OCI-LY7 (cell line): ENCODE measurements at regions of chr1 and their contacts with region 1.

Region 1: DNA sequence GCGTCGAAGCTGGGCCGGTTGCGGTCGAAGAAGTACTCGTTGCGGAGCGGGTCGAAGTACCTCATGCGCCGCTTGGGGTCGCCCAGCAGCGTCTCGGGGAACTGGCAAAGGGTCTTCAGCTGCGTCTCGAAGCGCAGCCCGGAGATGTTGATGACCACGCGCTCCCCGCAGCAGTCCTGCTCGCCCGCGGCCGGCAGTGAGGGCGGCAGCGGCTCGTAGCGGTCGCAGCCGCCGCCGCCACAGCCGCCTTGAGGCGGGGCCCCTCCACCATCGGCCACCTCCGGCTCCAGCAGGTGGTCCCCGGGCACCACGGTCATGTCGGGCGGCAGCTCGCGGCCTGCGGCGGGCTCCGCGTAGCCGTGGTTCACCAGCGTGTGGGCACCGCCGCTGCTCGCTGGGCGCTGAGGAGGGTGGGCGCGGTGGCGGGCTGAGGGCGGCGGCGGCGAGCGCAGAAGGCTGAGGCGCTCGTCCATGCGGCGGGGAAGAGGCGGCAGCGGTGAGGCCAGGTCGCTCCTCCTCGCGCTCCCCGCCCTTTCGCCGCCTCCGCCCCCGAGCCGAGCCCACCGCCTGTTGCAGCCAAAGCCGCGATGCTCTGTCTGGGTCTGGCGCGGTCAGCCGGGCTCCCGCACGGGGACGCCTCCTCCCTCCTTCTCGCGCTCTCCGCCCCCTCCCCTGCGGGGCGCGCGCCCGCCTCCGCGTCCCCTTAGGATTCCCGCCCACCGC is at the start of gene KCNA3:
- DNase-seq: peak; percentile 79
- H3K4me3 ChIP-seq: peak within 1 kb of the TSS; percentile 84
- H3K27ac ChIP-seq: peak within 1 kb of the TSS; percentile 97
- H3K4me1 ChIP-seq: peaks cover 29% of the 10 kb centered on the region
- CTCF ChIP-seq: peak; percentile 69
- total RNA-seq, gene KCNA3: 46.2 and 58.0 TPM in 2 replicates

Region 2: DNA sequence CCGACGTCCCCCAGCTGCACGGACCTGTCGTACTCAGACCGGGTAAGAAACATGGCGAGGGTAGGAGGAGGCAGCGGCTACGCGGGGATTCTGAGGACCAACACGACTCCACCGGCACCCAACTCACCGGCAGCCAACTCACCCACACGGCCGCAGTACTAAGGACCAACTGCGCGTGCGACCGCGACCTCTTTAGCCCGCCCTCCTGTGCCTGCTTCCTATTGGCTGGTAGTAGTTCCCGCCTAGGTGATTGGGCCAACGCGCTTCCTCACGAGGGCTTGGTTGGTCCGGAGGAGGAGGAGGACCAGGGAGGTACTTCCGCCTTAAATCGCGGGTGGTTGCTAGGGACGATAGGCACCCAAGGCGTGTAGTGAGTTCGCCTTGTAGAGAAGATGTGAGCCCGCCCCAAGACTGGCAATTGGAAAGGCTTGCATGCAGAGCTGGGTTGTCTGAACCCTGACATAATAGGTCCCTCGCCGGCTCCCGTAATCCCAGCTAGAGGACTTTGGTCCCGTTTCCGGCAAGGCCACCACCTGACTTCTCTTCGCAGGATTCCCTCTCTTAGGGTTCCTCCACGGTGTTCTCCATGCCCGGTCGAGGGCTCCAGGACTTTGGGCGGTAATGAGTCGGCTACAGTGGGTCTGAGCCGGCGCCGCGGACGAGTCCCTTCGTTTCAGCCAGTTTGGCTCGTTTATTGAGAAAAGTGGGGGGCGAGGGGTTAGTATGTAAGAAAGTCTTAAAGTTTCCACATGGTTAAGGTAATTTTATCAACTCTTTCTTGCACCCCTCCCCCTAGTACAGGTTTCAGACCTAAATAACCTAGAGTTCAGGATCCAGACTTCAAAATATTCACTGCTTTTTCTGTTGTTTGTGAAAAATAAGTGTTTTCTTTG is 1248.0 kb before region 1 on chr1 and contains the start of gene PSMA5:
- CTCF ChIA-PET with region 1: no interaction called
- POLR2A ChIA-PET with region 1: no interaction called
- intact Hi-C with region 1: loop called (anchors 5 kb)
- DNase-seq: peak; percentile 99
- H3K4me3 ChIP-seq: peak within 1 kb of the TSS; percentile 97
- H3K27ac ChIP-seq: peak within 1 kb of the TSS; percentile 85
- H3K4me1 ChIP-seq: peaks cover 25% of the 10 kb centered on the region
- CTCF ChIP-seq: no peak
- total RNA-seq, gene PSMA5: 46.3 and 53.3 TPM in 2 replicates

Region 3: GRCh38 chr1:110403805-110404204 is 270.7 kb before region 1 on chr1:
- CTCF ChIA-PET with region 1: no interaction called
- POLR2A ChIA-PET with region 1: no interaction called
- intact Hi-C with region 1: no loop called
- DNase-seq: no peak
- H3K4me3 ChIP-seq: no peak overlapping the region
- H3K27ac ChIP-seq: no peak overlapping the region
- H3K4me1 ChIP-seq: peaks cover 15% of the 10 kb centered on the region
- CTCF ChIP-seq: no peak

Region 4: DNA sequence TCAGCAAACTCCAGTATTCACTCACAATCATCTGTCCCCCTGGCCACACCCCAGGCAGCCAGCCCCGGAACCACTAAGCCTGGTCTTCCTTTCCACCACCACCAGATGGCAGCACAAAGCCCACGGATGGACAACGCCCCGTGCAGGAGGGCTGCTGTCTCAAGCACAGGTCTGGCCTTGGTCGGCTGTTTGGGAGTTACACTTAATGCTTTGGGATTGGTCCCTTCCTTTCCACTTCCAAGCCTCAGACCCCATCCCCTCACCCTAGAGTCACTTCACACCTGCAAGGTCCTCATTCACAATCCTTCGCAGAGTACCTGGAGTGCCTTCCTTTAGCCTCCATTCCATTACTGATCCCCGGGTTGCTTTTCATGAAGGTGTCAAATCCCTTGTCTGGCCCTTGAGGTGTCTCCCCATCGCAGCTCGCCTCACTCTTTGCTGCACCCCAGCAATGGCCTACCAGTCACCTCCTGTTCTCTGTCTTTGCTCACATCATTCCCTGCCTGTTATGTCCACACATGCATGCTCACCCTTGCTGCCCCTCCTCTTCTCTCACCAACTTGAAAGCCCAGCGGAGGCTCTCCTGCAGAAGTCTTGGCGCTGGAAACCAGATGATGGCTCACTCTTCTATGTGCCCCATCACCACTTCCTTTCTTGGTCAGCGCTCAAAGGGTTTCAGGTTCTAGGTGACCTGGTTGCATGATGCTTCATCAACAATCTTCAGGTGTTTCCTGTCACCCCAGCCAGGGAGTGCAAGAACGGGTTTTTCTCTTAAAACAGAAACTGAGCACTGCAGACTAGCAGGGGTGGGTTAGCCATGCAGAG is 43.4 kb before region 1 on chr1:
- CTCF ChIA-PET with region 1: interaction called, 7 read pairs
- POLR2A ChIA-PET with region 1: interaction called, 56 read pairs
- intact Hi-C with region 1: loop called (anchors 1 kb)
- DNase-seq: peak; percentile 91
- H3K4me3 ChIP-seq: peak overlapping the region; percentile 32
- H3K27ac ChIP-seq: peak overlapping the region; percentile 86
- H3K4me1 ChIP-seq: peaks cover 79% of the 10 kb centered on the region
- CTCF ChIP-seq: peak; percentile 92

Region 5: DNA sequence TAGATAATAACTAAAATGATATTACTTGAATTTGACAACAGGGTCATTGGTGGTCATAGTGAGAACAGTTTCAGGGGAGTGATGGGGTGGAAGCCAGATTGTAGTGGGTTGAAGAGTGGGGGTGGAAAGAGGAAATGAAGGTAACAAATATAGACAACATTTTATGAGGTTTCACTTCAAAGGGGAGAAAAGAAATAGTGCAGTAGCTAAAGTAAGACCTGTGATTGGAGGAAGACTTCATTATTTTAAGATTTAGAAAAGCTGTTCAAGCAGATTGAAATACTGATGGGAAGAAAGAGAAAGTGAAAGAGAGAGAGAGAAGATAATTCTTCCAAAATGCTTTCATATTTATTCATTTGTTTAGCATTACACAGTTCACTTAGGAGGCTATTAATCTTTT is 52.3 kb after region 1 on chr1:
- CTCF ChIA-PET with region 1: no interaction called
- POLR2A ChIA-PET with region 1: interaction called, 7 read pairs
- intact Hi-C with region 1: loop called (anchors 2 kb)
- DNase-seq: peak; percentile 66
- H3K4me3 ChIP-seq: peak overlapping the region; percentile 56
- H3K27ac ChIP-seq: peak overlapping the region; percentile 75
- H3K4me1 ChIP-seq: peaks cover 35% of the 10 kb centered on the region
- CTCF ChIP-seq: no peak

Region 6: GRCh38 chr1:110872745-110873720 is 198.5 kb after region 1 on chr1 and contains the start of gene CD53:
- CTCF ChIA-PET with region 1: no interaction called
- POLR2A ChIA-PET with region 1: no interaction called
- intact Hi-C with region 1: loop called (anchors 1 kb)
- DNase-seq: peak; percentile 91
- H3K4me3 ChIP-seq: peak within 1 kb of the TSS; percentile 82
- H3K27ac ChIP-seq: peak within 1 kb of the TSS; percentile 98
- H3K4me1 ChIP-seq: peaks cover 60% of the 10 kb centered on the region
- CTCF ChIP-seq: no peak
- total RNA-seq, gene CD53: 119 and 134 TPM in 2 replicates

Region 7: GRCh38 chr1:111406321-111406768 is 731.8 kb after region 1 on chr1:
- CTCF ChIA-PET with region 1: no interaction called
- POLR2A ChIA-PET with region 1: no interaction called
- intact Hi-C with region 1: loop called (anchors 5 kb)
- DNase-seq: peak; percentile 97
- H3K4me3 ChIP-seq: peak overlapping the region; percentile 46
- H3K27ac ChIP-seq: peak overlapping the region; percentile 94
- H3K4me1 ChIP-seq: peaks cover 61% of the 10 kb centered on the region
- CTCF ChIP-seq: no peak